Dendritic cell treated with granulocyte-macrophage colony-stimulating factor and Interleukin-4, amounts not matched to agents 40 ng/mL and 50 ng/mL, for 4 days (primary cell): ENCODE measurements at regions of chr6 and their contacts with region 1.

Region 1: GRCh38 chr6:151451950-151452749 is at the start of gene RMND1:
- H3K4me3 Mint-ChIP-seq: peak within 1 kb of the TSS; percentile 98
- H3K27ac Mint-ChIP-seq: peak within 1 kb of the TSS; percentile 94
- H3K4me1 Mint-ChIP-seq: peaks cover 29% of the 10 kb centered on the region
- H3K27me3 Mint-ChIP-seq: no peaks in the 10 kb centered on the region

Region 2: GRCh38 chr6:151390276-151391032 is 61.7 kb before region 1 on chr6:
- intact Hi-C with region 1: loop called (anchors 1 kb)
- H3K4me3 Mint-ChIP-seq: peak overlapping the region; percentile 90
- H3K27ac Mint-ChIP-seq: peak overlapping the region; percentile 97
- H3K4me1 Mint-ChIP-seq: peaks cover 38% of the 10 kb centered on the region
- H3K27me3 Mint-ChIP-seq: no peaks in the 10 kb centered on the region

Region 3: GRCh38 chr6:151440930-151441329 is 11.2 kb before region 1 on chr6:
- intact Hi-C with region 1: no loop called
- H3K4me3 Mint-ChIP-seq: no peak overlapping the region
- H3K27ac Mint-ChIP-seq: no peak overlapping the region
- H3K4me1 Mint-ChIP-seq: peaks cover 30% of the 10 kb centered on the region
- H3K27me3 Mint-ChIP-seq: no peaks in the 10 kb centered on the region

Region 4: DNA sequence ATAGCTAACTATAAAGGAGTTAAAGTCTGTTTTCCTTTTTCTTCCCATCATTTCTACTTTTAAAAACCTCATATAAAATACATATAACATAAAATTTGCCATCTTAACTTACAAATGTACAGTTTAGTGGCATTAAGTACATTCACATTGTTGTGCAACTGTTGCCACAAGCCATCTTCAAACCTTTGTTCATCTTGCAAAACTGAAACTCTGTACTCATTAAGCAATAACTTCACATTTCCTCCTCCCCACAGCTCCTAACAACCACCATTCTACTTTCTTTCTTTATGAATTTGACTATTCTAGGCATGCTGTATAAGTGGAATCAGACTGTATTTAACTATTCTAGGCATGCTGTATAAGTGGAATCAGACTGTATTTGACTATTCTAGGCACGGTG is 46.2 kb after region 1 on chr6:
- intact Hi-C with region 1: loop called (anchors 5 kb)
- H3K4me3 Mint-ChIP-seq: peak overlapping the region; percentile 44
- H3K27ac Mint-ChIP-seq: peak overlapping the region; percentile 92
- H3K4me1 Mint-ChIP-seq: peaks cover 52% of the 10 kb centered on the region
- H3K27me3 Mint-ChIP-seq: no peaks in the 10 kb centered on the region

Region 5: DNA sequence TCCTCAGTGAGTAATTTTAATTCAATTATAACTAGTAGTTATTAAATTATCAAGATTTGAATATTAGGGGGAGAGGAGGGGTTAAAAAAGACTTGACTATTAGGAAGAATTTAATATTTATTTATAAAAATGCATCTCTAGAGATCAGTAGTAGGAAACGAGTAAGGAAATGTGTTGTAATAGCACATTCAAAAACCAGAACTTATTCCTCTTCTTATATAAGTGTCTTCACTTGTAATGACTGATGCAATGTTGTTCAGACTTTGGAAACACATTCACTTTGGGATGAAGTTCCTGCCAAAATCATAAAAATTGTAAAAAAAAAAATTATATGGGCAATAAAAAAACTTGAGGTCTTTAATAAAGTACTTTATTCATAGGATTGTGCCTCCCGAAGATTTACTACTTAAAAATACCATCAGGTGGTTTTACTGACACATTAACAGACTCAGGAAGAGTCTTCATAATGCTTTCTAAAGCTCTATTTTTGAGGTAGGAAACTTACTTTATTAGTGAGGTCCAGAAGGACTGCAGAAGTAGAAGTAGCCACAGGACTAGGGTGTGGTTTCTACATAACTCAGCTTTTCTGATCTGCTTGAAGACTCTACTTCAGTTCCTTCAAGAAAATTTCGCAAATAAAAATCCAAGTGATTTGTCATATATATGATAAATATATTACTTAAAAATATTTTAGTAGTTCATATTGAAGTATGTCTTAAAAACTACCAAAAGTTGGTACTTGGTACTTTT is 101.4 kb after region 1 on chr6:
- intact Hi-C with region 1: loop called (anchors 1 kb)
- H3K4me3 Mint-ChIP-seq: no peak overlapping the region
- H3K27ac Mint-ChIP-seq: peak overlapping the region; percentile 95
- H3K4me1 Mint-ChIP-seq: peaks cover 32% of the 10 kb centered on the region
- H3K27me3 Mint-ChIP-seq: no peaks in the 10 kb centered on the region

Region 6: DNA sequence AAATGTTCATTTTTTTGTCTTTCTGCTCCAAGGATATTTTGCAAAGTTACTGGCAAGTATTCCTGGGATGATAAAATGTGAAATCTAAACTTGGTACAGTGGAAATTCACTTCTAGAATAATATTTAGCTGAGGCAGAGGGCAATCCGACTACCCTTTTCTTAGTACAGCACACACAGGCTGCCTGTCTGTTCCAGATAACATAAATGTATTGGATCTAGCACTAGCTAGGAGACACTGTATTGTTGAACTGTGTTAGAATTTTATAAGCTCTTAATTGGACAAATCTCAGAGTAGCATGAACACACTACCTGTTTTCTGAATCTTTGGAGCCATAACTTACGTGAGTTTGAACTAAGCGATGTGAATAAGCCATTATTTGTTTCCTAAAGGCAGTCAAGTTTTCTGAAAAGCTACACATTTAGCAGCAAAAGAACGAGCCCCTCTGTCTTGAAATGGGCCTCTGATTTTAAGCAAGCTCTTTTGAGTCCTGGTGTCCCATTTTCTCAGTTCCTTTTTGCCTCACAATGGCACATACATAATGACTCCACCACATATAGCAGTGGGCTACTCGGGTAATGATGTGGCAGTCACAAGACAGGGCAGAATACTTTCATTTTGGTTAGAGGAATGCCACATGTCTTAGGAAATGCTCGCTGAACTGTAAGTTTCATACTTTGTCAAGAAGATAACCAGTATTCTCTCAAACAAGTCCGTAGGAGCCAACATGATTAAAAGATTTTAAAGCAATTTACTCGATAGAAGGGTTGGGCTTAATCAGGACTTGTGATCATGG is 238.8 kb after region 1 on chr6:
- intact Hi-C with region 1: loop called (anchors 2 kb)
- H3K4me3 Mint-ChIP-seq: peak overlapping the region; percentile 69
- H3K27ac Mint-ChIP-seq: peak overlapping the region; percentile 88
- H3K4me1 Mint-ChIP-seq: peaks cover 20% of the 10 kb centered on the region
- H3K27me3 Mint-ChIP-seq: no peaks in the 10 kb centered on the region